Panc1 (cell line): ENCODE measurements at regions of chr7 and their contacts with region 1.

Region 1: GRCh38 chr7:46352004-46352954 is 431.2 kb upstream of the IGFBP3 start:
- DNase-seq: peak; percentile 43
- ATAC-seq: peak; percentile 93
- H3K4me3 ChIP-seq: no peak overlapping the region
- H3K27ac ChIP-seq: no peak overlapping the region
- H3K4me1 ChIP-seq: no peaks in the 10 kb centered on the region
- H3K27me3 ChIP-seq: no peaks in the 10 kb centered on the region
- CTCF ChIP-seq: peak; percentile 75

Region 2: DNA sequence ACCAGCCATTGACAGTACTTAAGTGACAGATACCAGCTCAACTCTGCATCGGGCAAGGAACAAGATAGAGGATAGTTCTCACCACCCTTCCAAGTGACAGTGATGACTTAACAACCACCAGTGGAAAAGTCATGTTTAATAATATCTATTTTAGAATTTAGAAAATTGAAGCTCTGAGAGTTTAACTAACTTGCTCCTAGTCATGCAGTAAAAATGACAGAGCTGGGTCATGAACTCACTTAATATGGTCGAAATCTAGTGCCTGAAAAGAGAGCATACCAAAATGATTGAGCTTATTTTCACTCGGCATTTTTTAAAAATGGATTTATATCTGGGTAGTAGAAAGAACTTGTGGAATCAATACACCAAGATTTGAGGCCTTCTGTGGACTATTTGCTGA is 63.4 kb before region 1 on chr7:
- CTCF ChIA-PET with region 1: no interaction called
- POLR2A ChIA-PET with region 1: interaction called, 10 read pairs
- in situ Hi-C with region 1: no loop called
- intact Hi-C with region 1: no loop called
- DNase-seq: no peak
- ATAC-seq: no peak
- H3K4me3 ChIP-seq: no peak overlapping the region
- H3K27ac ChIP-seq: no peak overlapping the region
- H3K4me1 ChIP-seq: no peaks in the 10 kb centered on the region
- H3K27me3 ChIP-seq: no peaks in the 10 kb centered on the region
- CTCF ChIP-seq: no peak

Region 3: GRCh38 chr7:46414946-46415345 is 62.7 kb after region 1 on chr7:
- CTCF ChIA-PET with region 1: no interaction called
- POLR2A ChIA-PET with region 1: no interaction called
- in situ Hi-C with region 1: no loop called
- intact Hi-C with region 1: no loop called
- DNase-seq: no peak
- ATAC-seq: no peak
- H3K4me3 ChIP-seq: no peak overlapping the region
- H3K27ac ChIP-seq: no peak overlapping the region
- H3K4me1 ChIP-seq: no peaks in the 10 kb centered on the region
- H3K27me3 ChIP-seq: no peaks in the 10 kb centered on the region
- CTCF ChIP-seq: no peak

Region 4: DNA sequence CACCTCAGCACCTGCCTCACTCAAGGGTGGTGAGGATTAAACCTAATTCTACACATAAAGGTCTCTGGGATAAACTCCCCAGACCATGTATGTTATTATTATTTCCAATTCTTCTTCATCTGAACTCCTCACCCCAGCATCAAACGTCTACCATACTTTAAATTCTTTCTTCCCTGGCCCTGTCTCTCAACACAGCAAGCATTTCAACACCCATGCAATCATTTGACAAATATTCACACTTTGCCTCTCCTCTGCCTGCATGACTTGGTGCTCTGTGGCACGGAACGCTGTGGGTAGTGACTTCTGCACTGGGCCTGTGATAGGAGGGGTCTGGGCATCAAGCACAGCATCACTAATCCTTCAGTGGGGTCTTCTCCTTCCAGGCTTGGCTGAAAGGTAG is 738.9 kb after region 1 on chr7:
- CTCF ChIA-PET with region 1: no interaction called
- POLR2A ChIA-PET with region 1: no interaction called
- in situ Hi-C with region 1: no loop called
- intact Hi-C with region 1: loop called (anchors 10 kb)
- DNase-seq: no peak
- ATAC-seq: no peak
- H3K4me3 ChIP-seq: no peak overlapping the region
- H3K27ac ChIP-seq: no peak overlapping the region
- H3K4me1 ChIP-seq: no peaks in the 10 kb centered on the region
- H3K27me3 ChIP-seq: no peaks in the 10 kb centered on the region
- CTCF ChIP-seq: no peak